Posterior vena cava (tissue), 2 donors: ENCODE measurements at regions of chr15 and their contacts with region 1.

Region 1: DNA sequence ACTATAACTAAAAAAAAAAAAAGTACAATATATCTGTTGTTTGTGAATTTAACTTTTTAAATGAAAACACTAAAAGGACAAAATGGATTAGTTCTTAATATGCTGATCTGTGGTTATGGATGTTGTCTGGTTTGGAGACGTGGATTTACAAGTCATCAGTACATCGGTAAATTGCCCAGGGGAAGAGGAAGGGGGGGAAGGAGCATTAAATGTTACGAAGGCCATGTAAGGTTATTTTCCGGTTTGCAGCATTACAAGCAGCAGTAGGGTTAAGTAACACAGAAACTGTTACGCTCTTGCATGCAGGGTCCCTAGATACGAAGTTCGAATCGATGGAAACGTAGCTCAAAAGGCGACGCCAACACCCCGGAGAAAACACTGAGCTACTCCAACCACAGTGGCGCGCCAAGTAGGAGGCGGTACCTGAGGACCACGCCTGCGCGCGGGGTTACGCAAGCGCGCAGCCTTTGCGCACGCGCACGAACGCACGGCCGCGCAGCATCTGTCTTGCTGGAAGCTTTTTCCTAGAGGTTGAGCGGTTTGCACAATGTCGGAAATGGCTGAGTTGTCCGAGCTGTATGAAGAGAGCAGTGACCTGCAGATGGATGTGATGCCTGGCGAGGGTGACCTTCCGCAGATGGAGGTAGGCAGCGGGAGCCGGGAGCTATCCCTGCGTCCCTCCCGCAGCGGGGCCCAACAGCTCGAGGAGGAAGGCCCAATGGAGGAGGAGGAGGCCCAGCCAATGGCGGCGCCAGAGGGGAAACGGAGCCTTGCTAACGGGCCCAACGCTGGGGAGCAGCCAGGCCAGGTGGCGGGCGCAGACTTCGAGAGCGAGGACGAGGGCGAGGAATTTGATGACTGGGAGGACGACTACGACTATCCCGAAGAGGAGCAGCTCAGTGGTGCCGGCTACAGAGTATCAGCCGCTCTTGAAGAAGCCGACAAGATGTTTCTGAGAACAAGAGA is at the start of gene EID1:
- DNase-seq: peak; percentile 98
- total RNA-seq, gene EID1: 202 to 230 TPM

Region 2: DNA sequence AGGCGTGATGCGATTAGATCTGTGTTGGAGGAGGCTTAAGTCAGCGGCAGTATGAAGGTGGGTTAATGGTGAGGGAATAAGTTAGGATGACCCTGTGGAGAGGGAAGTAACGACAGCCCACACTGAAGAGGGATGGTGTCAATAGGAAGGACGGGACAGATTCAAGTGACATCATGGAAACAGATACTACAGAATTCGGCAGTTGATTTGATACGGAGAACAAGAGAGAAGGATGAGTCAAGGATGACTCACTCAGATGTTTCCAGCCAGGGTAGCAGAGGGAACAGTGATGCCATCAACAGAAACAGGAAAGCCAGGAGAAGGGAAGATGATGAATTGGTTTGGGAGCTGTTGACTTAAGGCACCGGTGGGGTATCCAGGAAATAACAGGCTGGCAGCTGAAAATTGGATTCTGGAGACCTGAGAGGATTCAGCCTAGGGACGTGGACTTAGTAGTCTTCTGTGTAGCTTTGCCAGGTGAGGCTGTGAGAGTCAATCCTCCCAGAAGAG is 47.9 kb after region 1 on chr15:
- intact Hi-C with region 1: loop called in 1 of 2 experiments (anchors 1 kb)
- DNase-seq: no peak